ENCODE measurements at regions of chr17 and their contacts with region 1.

Region 1: DNA sequence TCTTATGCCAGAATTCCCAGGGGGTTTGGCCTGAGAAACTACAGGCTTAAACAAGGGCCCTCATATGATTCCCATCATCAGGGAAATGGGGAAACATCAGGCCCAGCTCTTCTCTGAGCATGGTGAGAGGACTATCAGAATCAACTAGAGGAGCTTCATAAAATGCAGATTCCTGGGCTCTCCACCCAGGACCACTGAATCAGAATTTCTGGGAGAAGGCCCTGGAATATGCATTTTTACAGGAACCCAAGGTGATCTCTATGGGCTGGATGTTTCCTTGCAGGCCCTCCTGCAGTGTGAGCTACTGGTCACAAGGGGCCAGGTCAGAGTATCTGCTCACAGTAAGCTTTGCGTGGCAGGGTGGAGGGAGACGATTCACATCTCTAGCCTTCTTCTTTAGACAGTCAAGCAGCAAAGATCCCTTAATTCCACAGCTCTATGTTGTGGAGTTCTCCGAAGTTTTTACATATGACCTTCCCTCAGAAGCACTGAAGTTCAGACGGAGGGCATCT is 38.8 kb upstream of the HOXB13 start:
- DNase-seq: no peak
- ATAC-seq: peak; percentile 65 to 83; a peak in 3 of 6 replicates
- H3K4me3 ChIP-seq: no peak overlapping the region
- H3K27ac ChIP-seq: no peak overlapping the region
- H3K4me1 ChIP-seq: no peaks in the 10 kb centered on the region
- CTCF ChIP-seq: no peak
- EP300 ChIP-seq: no peak
- POLR2A ChIP-seq: no peak
- RAD21 ChIP-seq: no peak

Region 2: GRCh38 chr17:48732688-48733629 is 34.4 kb before region 1 on chr17:
- CTCF ChIA-PET with region 1: interaction called, 20 read pairs
- POLR2A ChIA-PET with region 1: no interaction called
- DNase-seq: no peak
- ATAC-seq: no peak
- H3K4me3 ChIP-seq: no peak overlapping the region
- H3K27ac ChIP-seq: no peak overlapping the region
- H3K4me1 ChIP-seq: peaks cover 8% of the 10 kb centered on the region
- CTCF ChIP-seq: no peak
- EP300 ChIP-seq: no peak
- POLR2A ChIP-seq: no peak
- RAD21 ChIP-seq: no peak

Region 3: GRCh38 chr17:48747445-48748363 is 19.6 kb before region 1 on chr17:
- CTCF ChIA-PET with region 1: interaction called, 21 read pairs
- POLR2A ChIA-PET with region 1: no interaction called
- DNase-seq: no peak
- ATAC-seq: no peak
- H3K4me3 ChIP-seq: no peak overlapping the region
- H3K27ac ChIP-seq: no peak overlapping the region
- H3K4me1 ChIP-seq: peaks cover 17% of the 10 kb centered on the region; the same call in 2 of the 3 replicates
- CTCF ChIP-seq: no peak
- EP300 ChIP-seq: no peak
- POLR2A ChIP-seq: no peak
- RAD21 ChIP-seq: no peak

Region 4: GRCh38 chr17:48779421-48779820 is 12.1 kb after region 1 on chr17:
- CTCF ChIA-PET with region 1: interaction called, 11 read pairs
- POLR2A ChIA-PET with region 1: no interaction called
- DNase-seq: no peak
- ATAC-seq: no peak
- H3K4me3 ChIP-seq: no peak overlapping the region
- H3K27ac ChIP-seq: no peak overlapping the region
- H3K4me1 ChIP-seq: no peaks in the 10 kb centered on the region
- CTCF ChIP-seq: no peak
- EP300 ChIP-seq: no peak
- POLR2A ChIP-seq: no peak
- RAD21 ChIP-seq: no peak

Region 5: DNA sequence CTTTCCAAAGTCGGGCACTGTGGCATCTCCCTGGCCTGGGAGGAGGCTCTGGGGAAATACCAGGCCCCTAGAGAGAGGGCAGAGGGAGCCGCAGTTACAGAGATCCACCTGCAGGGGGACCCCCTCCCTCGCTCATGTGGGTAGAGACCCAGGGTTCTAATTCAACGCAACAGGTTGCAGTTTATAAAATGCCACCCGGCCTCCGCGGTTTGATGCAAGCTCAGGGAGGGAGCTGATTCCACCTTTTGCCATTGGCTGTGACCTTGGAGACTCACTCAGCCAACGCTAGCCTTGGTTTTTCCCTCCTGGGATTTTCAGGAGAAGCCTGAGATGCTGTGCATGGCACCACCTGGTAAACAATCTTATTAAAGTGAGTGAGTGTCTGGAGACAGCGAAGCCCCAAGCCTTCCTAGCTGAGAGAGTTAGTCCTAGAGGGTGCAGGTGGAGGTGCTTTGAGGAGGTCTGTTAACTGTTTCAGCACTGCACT is 37.6 kb after region 1 on chr17:
- CTCF ChIA-PET with region 1: interaction called, 21 read pairs
- POLR2A ChIA-PET with region 1: no interaction called
- DNase-seq: peak; percentile 78 to 96
- ATAC-seq: peak; percentile 95
- H3K4me3 ChIP-seq: no peak overlapping the region
- H3K27ac ChIP-seq: peak overlapping the region; percentile 53 to 73
- H3K4me1 ChIP-seq: peaks cover 56% of the 10 kb centered on the region
- CTCF ChIP-seq: peak; percentile 97
- EP300 ChIP-seq: no peak
- POLR2A ChIP-seq: no peak
- RAD21 ChIP-seq: peak; percentile 99